ENCODE measurements at regions of chr4 and their contacts with region 1.

Region 1: GRCh38 chr4:110631584-110632505 is 9.0 kb upstream of the PITX2 start:
- DNase-seq: peak; percentile 56
- H3K4me3 ChIP-seq: peak overlapping the region; percentile 36 to 43 (median 40)
- H3K27ac ChIP-seq: no peak overlapping the region
- H3K4me1 ChIP-seq: peaks cover 13% of the 10 kb centered on the region
- H3K27me3 ChIP-seq: peaks cover 73% of the 10 kb centered on the region
- CTCF ChIP-seq: peak; percentile 70 to 86

Region 2: DNA sequence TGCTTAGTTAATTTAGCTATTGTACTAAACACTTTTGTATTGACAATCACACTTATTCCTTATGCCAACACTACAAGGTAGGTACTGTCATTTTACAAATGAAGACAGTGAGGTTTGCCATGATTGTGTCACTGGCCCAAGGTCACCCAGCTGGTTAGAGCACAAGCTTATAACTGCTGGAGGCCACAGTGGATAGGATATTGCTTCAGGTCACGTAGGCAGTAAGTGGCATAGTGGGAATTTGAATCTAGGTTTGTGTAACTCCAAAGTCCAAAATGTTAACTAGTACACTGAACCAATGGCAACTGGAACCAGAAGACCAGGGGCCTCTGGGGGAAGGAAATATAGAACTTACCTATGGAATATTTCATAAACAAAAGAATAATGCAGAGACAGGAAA is 12.2 kb after region 1 on chr4:
- CTCF ChIA-PET with region 1: no interaction called
- dilution Hi-C with region 1: no loop called
- in situ Hi-C with region 1: no loop called
- intact Hi-C with region 1: no loop called
- DNase-seq: no peak
- H3K4me3 ChIP-seq: no peak overlapping the region
- H3K27ac ChIP-seq: no peak overlapping the region
- H3K4me1 ChIP-seq: no peaks in the 10 kb centered on the region
- H3K27me3 ChIP-seq: peaks cover 36% of the 10 kb centered on the region
- CTCF ChIP-seq: no peak

Region 3: GRCh38 chr4:110959041-110959643 is 327.3 kb after region 1 on chr4:
- CTCF ChIA-PET with region 1: no interaction called
- dilution Hi-C with region 1: no loop called
- in situ Hi-C with region 1: loop called (anchors 25 kb)
- intact Hi-C with region 1: loop called (anchors 1 kb)
- DNase-seq: no peak
- H3K4me3 ChIP-seq: no peak overlapping the region
- H3K27ac ChIP-seq: no peak overlapping the region
- H3K4me1 ChIP-seq: no peaks in the 10 kb centered on the region
- H3K27me3 ChIP-seq: peaks cover 6% of the 10 kb centered on the region
- CTCF ChIP-seq: peak; percentile 37 to 49

Region 4: GRCh38 chr4:111283061-111283677 is 651.3 kb after region 1 on chr4:
- CTCF ChIA-PET with region 1: no interaction called
- dilution Hi-C with region 1: no loop called
- in situ Hi-C with region 1: no loop called
- intact Hi-C with region 1: loop called (anchors 1 kb)
- DNase-seq: peak; percentile 32
- H3K4me3 ChIP-seq: no peak overlapping the region
- H3K27ac ChIP-seq: no peak overlapping the region
- H3K4me1 ChIP-seq: no peaks in the 10 kb centered on the region
- H3K27me3 ChIP-seq: peaks cover 2% of the 10 kb centered on the region
- CTCF ChIP-seq: peak; percentile 89 to 97

Region 5: GRCh38 chr4:111631215-111631999 is 999.6 kb after region 1 on chr4:
- CTCF ChIA-PET with region 1: no interaction called
- dilution Hi-C with region 1: no loop called
- in situ Hi-C with region 1: loop called (anchors 25 kb)
- intact Hi-C with region 1: loop called (anchors 2 kb)
- DNase-seq: no peak
- H3K4me3 ChIP-seq: no peak overlapping the region
- H3K27ac ChIP-seq: no peak overlapping the region
- H3K4me1 ChIP-seq: peaks cover 4% of the 10 kb centered on the region
- H3K27me3 ChIP-seq: no peaks in the 10 kb centered on the region
- CTCF ChIP-seq: peak; percentile 58 to 62

Region 6: GRCh38 chr4:112031712-112032328 is 1400.0 kb after region 1 on chr4:
- CTCF ChIA-PET with region 1: no interaction called
- dilution Hi-C with region 1: no loop called
- in situ Hi-C with region 1: loop called in 1 of 2 experiments (anchors 25 kb)
- intact Hi-C with region 1: loop called (anchors 1 kb)
- DNase-seq: peak; percentile 31
- H3K4me3 ChIP-seq: no peak overlapping the region
- H3K27ac ChIP-seq: no peak overlapping the region
- H3K4me1 ChIP-seq: peaks cover 2% of the 10 kb centered on the region
- H3K27me3 ChIP-seq: peaks cover 8% of the 10 kb centered on the region
- CTCF ChIP-seq: peak; percentile 61 to 75

Measured in mammary epithelial cell (primary cell).